T-cell (primary cell): ENCODE measurements at regions of chr12 and their contacts with region 1.

Region 1: DNA sequence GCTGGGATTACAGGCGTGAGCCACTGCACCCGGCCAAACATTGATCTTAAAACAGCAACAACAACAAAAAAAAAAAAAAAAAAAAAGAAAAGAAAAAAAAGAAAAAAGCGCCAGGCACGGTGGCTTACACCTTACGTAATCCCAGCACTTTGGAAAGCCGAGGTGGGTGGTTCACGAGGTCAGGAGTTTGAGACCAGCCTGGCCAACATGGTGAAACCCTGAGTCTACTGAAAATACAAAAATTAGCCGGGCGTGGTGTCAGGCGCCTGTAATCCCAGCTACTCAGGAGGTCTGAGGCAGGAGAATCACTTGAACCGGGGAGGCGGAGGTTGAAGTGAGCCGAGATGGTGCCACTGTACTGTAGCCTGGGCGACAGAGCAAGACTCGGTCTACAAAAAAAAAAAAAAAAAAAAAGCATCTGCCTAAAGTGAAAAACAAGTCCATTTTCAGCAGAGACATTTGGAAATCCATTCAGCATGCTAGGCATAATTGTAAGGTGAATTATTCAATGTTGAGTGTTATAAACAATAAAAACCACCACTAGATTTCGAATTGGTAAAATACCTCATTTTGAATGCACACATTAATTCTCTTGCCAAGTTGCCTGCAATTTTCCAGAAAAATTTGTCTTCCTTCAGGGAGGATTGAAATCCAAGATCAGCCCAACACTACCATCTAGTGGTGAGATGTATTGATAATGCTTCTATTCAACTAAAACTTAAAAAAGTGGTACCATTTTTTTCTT is 8.0 kb upstream of the CERS5 start:
- DNase-seq: peak in 4 of 35 experiments; percentile 15 to 82 (median 30)
- ATAC-seq: peak in 2 of 4 experiments; percentile 26 to 59
- H3K4me3 ChIP-seq: no peak overlapping the region
- H3K4me3 Mint-ChIP-seq: no peak overlapping the region
- H3K27ac ChIP-seq: no peak overlapping the region
- H3K27ac Mint-ChIP-seq: no peak overlapping the region
- H3K4me1 ChIP-seq: no peaks in the 10 kb centered on the region
- H3K4me1 Mint-ChIP-seq: no peaks in the 10 kb centered on the region
- H3K27me3 ChIP-seq: no peaks in the 10 kb centered on the region
- H3K27me3 Mint-ChIP-seq: no peaks in the 10 kb centered on the region

Region 2: GRCh38 chr12:50132505-50133135 is 42.5 kb before region 1 on chr12:
- CTCF ChIA-PET with region 1: interaction called, 5 to 19 read pairs
- POLR2A ChIA-PET with region 1: no interaction called
- DNase-seq: peak in 3 of 35 experiments; percentile 7 to 60 (median 24)
- ATAC-seq: peak in 2 of 4 experiments; percentile 36 to 65
- H3K4me3 ChIP-seq: no peak overlapping the region
- H3K4me3 Mint-ChIP-seq: no peak overlapping the region
- H3K27ac ChIP-seq: no peak overlapping the region
- H3K27ac Mint-ChIP-seq: peak overlapping the region; percentile 7 to 79
- H3K4me1 ChIP-seq: no peaks in the 10 kb centered on the region
- H3K4me1 Mint-ChIP-seq: peaks cover 5 to 16% (median 12%) of the 10 kb centered on the region in 3 donors
- H3K27me3 ChIP-seq: no peaks in the 10 kb centered on the region
- H3K27me3 Mint-ChIP-seq: no peaks in the 10 kb centered on the region

Region 3: GRCh38 chr12:50242751-50243191 is 67.6 kb after region 1 on chr12:
- CTCF ChIA-PET with region 1: no interaction called
- POLR2A ChIA-PET with region 1: no interaction called
- DNase-seq: no peak
- ATAC-seq: no peak
- H3K4me3 ChIP-seq: no peak overlapping the region
- H3K4me3 Mint-ChIP-seq: no peak overlapping the region
- H3K27ac ChIP-seq: no peak overlapping the region
- H3K27ac Mint-ChIP-seq: no peak overlapping the region
- H3K4me1 ChIP-seq: no peaks in the 10 kb centered on the region
- H3K4me1 Mint-ChIP-seq: peaks cover 0 to 3% (median 2%) of the 10 kb centered on the region in 3 donors
- H3K27me3 ChIP-seq: no peaks in the 10 kb centered on the region
- H3K27me3 Mint-ChIP-seq: no peaks in the 10 kb centered on the region

Region 4: GRCh38 chr12:50365709-50366406 is 190.7 kb after region 1 on chr12:
- CTCF ChIA-PET with region 1: no interaction called
- POLR2A ChIA-PET with region 1: no interaction called
- DNase-seq: no peak
- ATAC-seq: no peak
- H3K4me3 ChIP-seq: no peak overlapping the region
- H3K4me3 Mint-ChIP-seq: no peak overlapping the region
- H3K27ac ChIP-seq: no peak overlapping the region
- H3K27ac Mint-ChIP-seq: no peak overlapping the region
- H3K4me1 ChIP-seq: no peaks in the 10 kb centered on the region
- H3K4me1 Mint-ChIP-seq: no peaks in the 10 kb centered on the region
- H3K27me3 ChIP-seq: peaks cover 0 to 6% of the 10 kb centered on the region in 2 experiments
- H3K27me3 Mint-ChIP-seq: peaks cover 0 to 3% of the 10 kb centered on the region in 2 donors